PC-9 (cell line): ENCODE measurements at regions of chr4 and their contacts with region 1.

Region 1: DNA sequence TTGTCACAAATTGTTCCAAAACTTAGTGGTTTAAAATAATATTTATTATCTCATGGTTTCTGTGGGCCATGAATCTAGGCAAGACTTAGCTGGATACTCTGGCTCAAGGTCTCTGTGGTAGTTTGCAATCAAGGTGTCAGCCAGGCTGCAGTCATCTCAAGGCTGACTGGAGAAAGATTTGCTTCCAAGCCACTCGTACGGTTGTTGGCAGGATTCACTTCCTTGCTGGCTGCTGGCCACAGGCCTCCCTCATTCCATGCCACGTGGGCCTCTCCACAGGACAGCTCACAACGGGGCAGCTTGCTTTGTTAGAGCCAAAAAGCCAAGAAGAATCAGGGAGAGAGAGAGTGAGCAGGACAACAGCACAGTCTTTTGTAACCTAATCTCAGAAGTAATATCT is 101.4 kb downstream of the WWC2 start:
- DNase-seq: peak; percentile 64 to 70
- H3K4me3 ChIP-seq: no peak overlapping the region
- H3K27ac ChIP-seq: peak overlapping the region; percentile 65
- H3K4me1 ChIP-seq: peaks cover 34% of the 10 kb centered on the region
- H3K27me3 ChIP-seq: no peaks in the 10 kb centered on the region
- CTCF ChIP-seq: no peak

Region 2: GRCh38 chr4:183118585-183118984 is 81.9 kb before region 1 on chr4:
- CTCF ChIA-PET with region 1: no interaction called
- POLR2A ChIA-PET with region 1: no interaction called
- intact Hi-C with region 1: loop called (anchors 5 kb)
- DNase-seq: peak; percentile 53 to 86
- H3K4me3 ChIP-seq: no peak overlapping the region
- H3K27ac ChIP-seq: peak overlapping the region; percentile 54
- H3K4me1 ChIP-seq: peaks cover 14% of the 10 kb centered on the region
- H3K27me3 ChIP-seq: no peaks in the 10 kb centered on the region
- CTCF ChIP-seq: no peak

Region 3: DNA sequence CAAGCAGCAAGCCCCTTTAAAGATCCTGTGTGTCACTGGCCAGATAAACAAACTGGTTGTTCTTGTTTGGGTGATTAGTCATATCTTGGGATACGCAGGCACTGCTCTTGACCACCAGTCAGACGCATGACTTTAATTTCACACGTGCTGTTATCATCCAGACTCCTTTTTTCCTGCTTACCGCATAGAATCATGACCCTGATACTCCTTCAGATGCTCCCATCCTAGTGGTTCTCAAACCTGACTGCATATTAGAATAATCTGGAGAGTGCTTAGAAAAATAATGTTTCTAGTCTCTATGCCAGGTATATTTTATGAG is 40.8 kb after region 1 on chr4:
- CTCF ChIA-PET with region 1: no interaction called
- POLR2A ChIA-PET with region 1: no interaction called
- intact Hi-C with region 1: loop called (anchors 2 kb)
- DNase-seq: peak; percentile 51 to 87
- H3K4me3 ChIP-seq: no peak overlapping the region
- H3K27ac ChIP-seq: peak overlapping the region; percentile 57
- H3K4me1 ChIP-seq: peaks cover 28% of the 10 kb centered on the region
- H3K27me3 ChIP-seq: no peaks in the 10 kb centered on the region
- CTCF ChIP-seq: no peak

Region 4: DNA sequence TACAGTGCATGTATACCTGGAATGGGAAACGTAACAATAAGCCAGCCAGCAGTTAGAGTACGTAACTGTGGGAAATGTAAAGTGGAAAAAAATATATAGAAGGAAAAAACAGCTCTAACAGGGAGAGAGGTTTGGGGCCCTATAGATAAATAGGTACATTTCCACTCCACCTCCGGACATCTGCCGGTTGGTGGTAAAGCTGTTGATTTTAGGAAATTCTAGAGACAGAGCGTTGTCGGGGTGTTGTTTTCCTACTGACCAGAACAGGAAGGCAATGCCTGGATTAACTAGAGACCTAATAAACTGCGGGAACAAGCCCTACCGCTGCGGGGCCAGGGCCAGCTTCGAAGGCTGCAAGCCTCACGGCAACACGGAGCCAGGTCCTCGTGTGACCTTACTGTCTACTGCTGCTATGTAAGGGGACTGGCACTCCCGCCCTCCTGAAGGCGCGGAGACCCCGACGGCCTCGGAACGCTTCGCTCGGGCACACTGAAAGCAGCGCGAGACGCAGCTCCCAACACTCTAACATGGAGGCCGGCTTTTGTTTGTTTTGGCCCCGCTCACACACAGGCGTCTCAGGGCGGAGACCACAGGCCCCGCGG is 243.3 kb after region 1 on chr4:
- CTCF ChIA-PET with region 1: no interaction called
- POLR2A ChIA-PET with region 1: no interaction called
- intact Hi-C with region 1: no loop called
- DNase-seq: peak in 1 of 2 experiments; percentile 35
- H3K4me3 ChIP-seq: peak overlapping the region; percentile 88
- H3K27ac ChIP-seq: peak overlapping the region; percentile 93
- H3K4me1 ChIP-seq: peaks cover 17% of the 10 kb centered on the region
- H3K27me3 ChIP-seq: no peaks in the 10 kb centered on the region
- CTCF ChIP-seq: no peak